Right cardiac atrium (tissue), 5 donors: ENCODE measurements at regions of chr6 and their contacts with region 1.

Region 1: GRCh38 chr6:105733565-105734162 is 330.8 kb upstream of the PREP start:
- DNase-seq: no peak
- ATAC-seq: no peak
- H3K4me3 ChIP-seq: no peak overlapping the region
- H3K27ac ChIP-seq: no peak overlapping the region
- H3K4me1 ChIP-seq: no peaks in the 10 kb centered on the region
- H3K27me3 ChIP-seq: no peaks in the 10 kb centered on the region

Region 2: DNA sequence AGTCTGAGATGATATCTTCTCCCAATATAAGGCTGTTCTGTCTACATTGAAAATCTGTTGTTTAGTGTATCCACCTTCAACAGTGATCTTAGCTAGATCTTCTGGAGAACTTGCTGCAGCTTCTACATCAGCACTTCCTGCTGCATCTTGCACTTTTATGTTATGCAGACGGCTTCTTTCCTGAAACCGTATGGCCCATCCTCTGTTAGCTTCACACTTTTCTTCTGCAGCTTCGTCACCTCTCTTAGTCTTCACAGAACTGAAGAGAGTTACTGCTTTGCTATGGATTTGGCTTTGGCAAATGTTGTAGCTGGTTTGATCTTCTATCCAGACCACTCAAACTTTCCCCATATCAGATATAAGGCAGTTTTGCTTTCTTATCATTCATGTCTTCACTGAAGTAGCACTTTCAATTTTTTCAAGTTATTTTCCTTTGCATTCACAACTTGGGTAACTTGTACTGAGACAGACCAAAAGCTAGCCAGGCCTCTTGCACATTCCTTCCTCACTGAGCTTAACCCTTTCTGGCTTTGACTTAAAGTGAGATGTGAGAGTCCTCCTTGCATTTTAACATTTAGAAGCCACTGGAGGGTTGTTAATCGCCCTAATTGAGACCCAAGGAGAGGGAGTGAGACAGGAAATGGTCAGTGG is 440.9 kb before region 1 on chr6:
- intact Hi-C with region 1: no loop called
- DNase-seq: no peak
- ATAC-seq: no peak
- H3K4me3 ChIP-seq: no peak overlapping the region
- H3K27ac ChIP-seq: no peak overlapping the region
- H3K4me1 ChIP-seq: no peaks in the 10 kb centered on the region
- H3K27me3 ChIP-seq: no peaks in the 10 kb centered on the region

Region 3: GRCh38 chr6:105474234-105474633 is 259.4 kb before region 1 on chr6:
- intact Hi-C with region 1: loop called in 1 of 4 experiments (anchors 10 kb)
- DNase-seq: no peak
- ATAC-seq: peak in 1 of 2 donors; percentile 33
- H3K4me3 ChIP-seq: no peak overlapping the region
- H3K27ac ChIP-seq: no peak overlapping the region
- H3K4me1 ChIP-seq: no peaks in the 10 kb centered on the region
- H3K27me3 ChIP-seq: no peaks in the 10 kb centered on the region

Region 4: GRCh38 chr6:105786890-105787655 is 53.4 kb after region 1 on chr6:
- intact Hi-C with region 1: no loop called
- DNase-seq: no peak
- ATAC-seq: no peak
- H3K4me3 ChIP-seq: no peak overlapping the region
- H3K27ac ChIP-seq: no peak overlapping the region
- H3K4me1 ChIP-seq: no peaks in the 10 kb centered on the region
- H3K27me3 ChIP-seq: no peaks in the 10 kb centered on the region

Region 5: GRCh38 chr6:105862936-105863607 is 129.4 kb after region 1 on chr6:
- intact Hi-C with region 1: no loop called
- DNase-seq: no peak
- ATAC-seq: no peak
- H3K4me3 ChIP-seq: no peak overlapping the region
- H3K27ac ChIP-seq: no peak overlapping the region
- H3K4me1 ChIP-seq: no peaks in the 10 kb centered on the region
- H3K27me3 ChIP-seq: no peaks in the 10 kb centered on the region

Region 6: GRCh38 chr6:106223300-106223930 is 489.8 kb after region 1 on chr6:
- intact Hi-C with region 1: loop called in 2 of 4 experiments (anchors 5 to 10 kb)
- DNase-seq: peak in 2 of 3 donors; percentile 27 to 63
- ATAC-seq: no peak
- H3K4me3 ChIP-seq: no peak overlapping the region
- H3K27ac ChIP-seq: no peak overlapping the region
- H3K4me1 ChIP-seq: no peaks in the 10 kb centered on the region
- H3K27me3 ChIP-seq: no peaks in the 10 kb centered on the region